H1 (cell line): ENCODE measurements at regions of chr9 and their contacts with region 1.

Region 1: GRCh38 chr9:93682232-93682968 is 106.0 kb downstream of the PHF2 start:
- DNase-seq: peak; percentile 60 to 99
- H3K4me3 ChIP-seq: no peak overlapping the region
- H3K27ac ChIP-seq: peak overlapping the region; percentile 56; the same call in 1 of the 2 replicates
- H3K4me1 ChIP-seq: no peaks in the 10 kb centered on the region
- H3K27me3 ChIP-seq: no peaks in the 10 kb centered on the region
- CTCF ChIP-seq: peak in 2 of 3 experiments; percentile 82 to 92; a peak in 3 of 4 replicates
- EP300 ChIP-seq: peak in 1 of 2 experiments; percentile 66; a peak in 1 of 3 replicates
- POLR2A ChIP-seq: no peak
- RAD21 ChIP-seq: peak; percentile 95 to 98

Region 2: GRCh38 chr9:93612052-93612795 is 70.2 kb before region 1 on chr9:
- CTCF ChIA-PET with region 1: no interaction called
- POLR2A ChIA-PET with region 1: no interaction called
- DNase-seq: no peak
- H3K4me3 ChIP-seq: no peak overlapping the region
- H3K27ac ChIP-seq: no peak overlapping the region
- H3K4me1 ChIP-seq: peaks cover 0 to 4% (median 0%) of the 10 kb centered on the region in 4 experiments; a peak in 3 of 7 replicates
- H3K27me3 ChIP-seq: no peaks in the 10 kb centered on the region
- CTCF ChIP-seq: no peak
- EP300 ChIP-seq: no peak
- POLR2A ChIP-seq: no peak
- RAD21 ChIP-seq: no peak

Region 3: GRCh38 chr9:93633492-93634221 is 48.7 kb before region 1 on chr9:
- CTCF ChIA-PET with region 1: no interaction called
- POLR2A ChIA-PET with region 1: no interaction called
- DNase-seq: peak in 1 of 2 experiments; percentile 41
- H3K4me3 ChIP-seq: no peak overlapping the region
- H3K27ac ChIP-seq: no peak overlapping the region
- H3K4me1 ChIP-seq: peaks cover 0 to 5% (median 0%) of the 10 kb centered on the region in 4 experiments; a peak in 2 of 7 replicates
- H3K27me3 ChIP-seq: no peaks in the 10 kb centered on the region
- CTCF ChIP-seq: no peak
- EP300 ChIP-seq: no peak
- POLR2A ChIP-seq: no peak
- RAD21 ChIP-seq: no peak

Region 4: GRCh38 chr9:93801581-93802284 is 119.3 kb after region 1 on chr9:
- CTCF ChIA-PET with region 1: interaction called, 27 read pairs
- POLR2A ChIA-PET with region 1: no interaction called
- DNase-seq: no peak
- H3K4me3 ChIP-seq: no peak overlapping the region
- H3K27ac ChIP-seq: no peak overlapping the region
- H3K4me1 ChIP-seq: no peaks in the 10 kb centered on the region
- H3K27me3 ChIP-seq: no peaks in the 10 kb centered on the region
- CTCF ChIP-seq: no peak
- EP300 ChIP-seq: no peak
- POLR2A ChIP-seq: no peak
- RAD21 ChIP-seq: no peak

Region 5: DNA sequence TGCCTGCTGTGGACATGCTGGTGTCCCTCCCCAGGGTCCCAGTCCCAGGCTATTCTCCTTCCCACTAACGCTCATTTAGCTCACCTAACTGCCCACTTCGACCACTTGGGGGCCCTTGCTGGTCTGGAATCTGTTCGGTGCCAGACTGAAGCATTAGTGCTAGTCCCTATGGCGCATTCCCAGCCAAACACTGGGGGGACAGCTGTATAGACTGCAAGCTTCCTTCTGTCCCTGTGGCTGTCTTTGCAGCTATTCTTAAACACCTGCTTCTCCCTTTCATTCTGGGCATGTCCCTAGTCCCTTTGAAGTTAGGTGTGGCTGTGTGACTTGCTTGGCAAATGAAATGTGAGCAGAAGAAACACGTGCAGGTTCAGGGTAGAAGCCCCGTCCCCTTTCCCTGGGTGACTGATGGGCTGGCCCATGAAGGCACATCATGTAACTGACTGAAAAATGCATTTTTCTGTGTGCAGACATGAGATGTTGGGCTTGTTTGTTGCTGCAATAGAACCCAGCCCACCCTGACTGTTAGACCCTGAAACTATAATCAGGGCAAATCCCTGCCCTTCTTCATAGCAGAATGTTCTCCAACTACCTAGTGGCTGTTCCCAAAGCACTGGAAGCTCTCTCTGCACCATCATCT is 138.4 kb after region 1 on chr9:
- CTCF ChIA-PET with region 1: interaction called, 33 read pairs
- POLR2A ChIA-PET with region 1: no interaction called
- DNase-seq: no peak
- H3K4me3 ChIP-seq: no peak overlapping the region
- H3K27ac ChIP-seq: no peak overlapping the region
- H3K4me1 ChIP-seq: no peaks in the 10 kb centered on the region; a peak in 1 of 7 replicates
- H3K27me3 ChIP-seq: peaks cover 0 to 3% (median 0%) of the 10 kb centered on the region in 4 experiments; a peak in 3 of 7 replicates
- CTCF ChIP-seq: peak in 2 of 3 experiments; percentile 66 to 72; a peak in 3 of 4 replicates
- EP300 ChIP-seq: no peak
- POLR2A ChIP-seq: no peak
- RAD21 ChIP-seq: peak; percentile 43 to 59

Region 6: DNA sequence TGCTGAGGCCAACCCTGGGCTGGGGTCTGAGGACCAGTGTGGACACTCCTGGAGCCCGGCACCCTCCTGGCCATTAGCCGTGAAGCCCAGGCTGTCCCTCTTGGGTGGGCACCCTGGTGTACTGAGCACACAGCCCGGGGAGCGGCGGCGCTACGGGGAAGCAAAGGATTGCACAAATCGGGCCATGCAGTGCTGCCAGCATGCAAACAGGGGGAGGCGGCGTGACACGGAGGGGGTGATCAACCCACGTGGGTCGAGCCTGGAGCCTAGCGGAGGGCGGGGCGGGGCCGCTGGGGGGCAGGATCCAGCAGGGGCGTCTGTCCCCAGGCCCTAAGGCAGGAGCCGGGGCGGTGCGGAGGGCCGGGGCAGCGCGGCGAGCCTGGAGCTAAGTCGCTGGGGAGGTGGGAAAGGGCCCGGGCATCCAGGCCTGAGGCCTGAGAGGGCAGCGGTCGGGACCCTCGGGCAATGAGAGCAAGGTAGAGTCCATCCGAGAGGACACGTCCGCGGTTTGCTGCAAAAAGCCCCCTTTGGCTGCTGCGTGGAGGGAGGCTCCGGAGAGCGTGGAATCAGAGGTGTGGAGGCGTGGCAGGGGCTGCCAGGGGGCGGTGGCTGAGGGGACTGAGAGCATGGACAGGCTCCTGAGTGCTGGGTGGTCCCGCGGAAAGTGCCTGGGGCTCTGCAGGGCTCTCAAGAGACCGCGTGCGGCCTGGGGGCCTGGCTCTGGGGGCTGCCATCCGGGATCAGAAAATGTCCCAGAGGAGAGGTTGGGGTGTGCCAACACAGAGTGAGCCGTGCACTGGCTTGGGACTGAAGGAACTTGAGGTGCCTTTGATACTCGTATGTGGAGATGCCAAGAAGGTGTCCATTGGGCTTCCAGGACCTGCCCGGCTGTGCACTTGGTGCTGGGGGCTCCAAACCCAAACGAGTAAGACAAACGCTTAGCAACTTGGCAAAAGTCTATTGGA is 178.6 kb after region 1 on chr9:
- CTCF ChIA-PET with region 1: interaction called, 21 read pairs
- POLR2A ChIA-PET with region 1: no interaction called
- DNase-seq: no peak
- H3K4me3 ChIP-seq: no peak overlapping the region
- H3K27ac ChIP-seq: no peak overlapping the region
- H3K4me1 ChIP-seq: peaks cover 2 to 8% (median 4%) of the 10 kb centered on the region in 4 experiments; a peak in 5 of 7 replicates
- H3K27me3 ChIP-seq: no peaks in the 10 kb centered on the region; a peak in 2 of 7 replicates
- CTCF ChIP-seq: peak in 1 of 3 experiments; percentile 20; a peak in 1 of 4 replicates
- EP300 ChIP-seq: no peak
- POLR2A ChIP-seq: no peak
- RAD21 ChIP-seq: no peak; a peak in 1 of 4 replicates

Region 7: DNA sequence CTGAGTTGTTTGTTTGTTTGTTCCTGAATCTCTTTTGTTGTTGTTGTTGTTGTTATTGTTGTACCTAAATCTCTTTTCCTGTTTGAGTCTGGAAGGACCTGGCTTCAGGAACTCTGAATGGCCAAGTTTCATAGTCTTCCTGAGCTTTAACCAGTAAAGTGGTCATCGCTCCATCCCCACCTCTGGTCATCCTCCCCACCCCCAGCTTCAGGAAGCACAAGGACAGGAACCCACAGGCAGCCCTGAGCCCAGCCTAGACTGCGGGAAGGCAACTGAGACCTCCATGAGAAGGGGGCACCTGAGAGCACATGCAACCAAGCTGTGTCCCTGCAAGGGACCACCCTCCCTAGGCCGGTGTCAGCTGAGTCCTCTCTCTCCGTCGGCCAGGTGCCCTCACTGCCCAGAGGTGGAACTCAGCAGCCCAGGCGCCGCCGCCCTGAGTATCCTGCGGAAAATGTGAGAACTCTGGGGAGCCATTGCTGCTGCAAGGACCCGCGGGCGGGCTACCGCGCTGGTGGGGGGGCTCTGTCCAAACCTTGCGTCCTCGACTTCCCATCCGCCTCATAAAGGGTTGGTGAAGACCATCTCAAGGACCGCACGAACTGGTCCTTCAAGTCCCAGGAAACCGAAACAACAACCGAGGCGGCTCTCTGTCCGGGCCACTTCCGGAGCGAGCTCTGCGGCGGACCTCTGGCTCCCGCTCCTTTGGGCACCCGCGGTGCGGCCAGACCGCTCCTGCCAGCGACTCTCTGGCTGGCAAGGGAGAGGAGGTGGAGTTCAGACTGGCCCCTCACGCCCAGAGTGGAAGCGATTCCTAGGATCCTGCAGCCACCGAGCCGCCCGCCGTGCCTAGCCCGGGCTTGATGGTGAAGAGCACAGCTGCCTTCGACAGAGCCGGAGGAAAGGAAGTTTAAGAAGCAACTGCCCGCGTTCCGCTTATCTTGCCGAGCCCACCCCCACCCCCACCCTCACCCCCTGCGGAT is 268.5 kb after region 1 on chr9:
- CTCF ChIA-PET with region 1: interaction called, 24 read pairs
- POLR2A ChIA-PET with region 1: interaction called, 4 read pairs
- DNase-seq: peak in 1 of 2 experiments; percentile 75
- H3K4me3 ChIP-seq: peak overlapping the region; percentile 14 to 57 (median 24); a peak in 7 of 8 replicates
- H3K27ac ChIP-seq: no peak overlapping the region
- H3K4me1 ChIP-seq: peaks cover 0 to 73% (median 42%) of the 10 kb centered on the region in 4 experiments; a peak in 6 of 7 replicates
- H3K27me3 ChIP-seq: peaks cover 96 to 99% (median 96%) of the 10 kb centered on the region in 4 experiments
- CTCF ChIP-seq: no peak
- EP300 ChIP-seq: no peak
- POLR2A ChIP-seq: no peak
- RAD21 ChIP-seq: no peak

Region 8: DNA sequence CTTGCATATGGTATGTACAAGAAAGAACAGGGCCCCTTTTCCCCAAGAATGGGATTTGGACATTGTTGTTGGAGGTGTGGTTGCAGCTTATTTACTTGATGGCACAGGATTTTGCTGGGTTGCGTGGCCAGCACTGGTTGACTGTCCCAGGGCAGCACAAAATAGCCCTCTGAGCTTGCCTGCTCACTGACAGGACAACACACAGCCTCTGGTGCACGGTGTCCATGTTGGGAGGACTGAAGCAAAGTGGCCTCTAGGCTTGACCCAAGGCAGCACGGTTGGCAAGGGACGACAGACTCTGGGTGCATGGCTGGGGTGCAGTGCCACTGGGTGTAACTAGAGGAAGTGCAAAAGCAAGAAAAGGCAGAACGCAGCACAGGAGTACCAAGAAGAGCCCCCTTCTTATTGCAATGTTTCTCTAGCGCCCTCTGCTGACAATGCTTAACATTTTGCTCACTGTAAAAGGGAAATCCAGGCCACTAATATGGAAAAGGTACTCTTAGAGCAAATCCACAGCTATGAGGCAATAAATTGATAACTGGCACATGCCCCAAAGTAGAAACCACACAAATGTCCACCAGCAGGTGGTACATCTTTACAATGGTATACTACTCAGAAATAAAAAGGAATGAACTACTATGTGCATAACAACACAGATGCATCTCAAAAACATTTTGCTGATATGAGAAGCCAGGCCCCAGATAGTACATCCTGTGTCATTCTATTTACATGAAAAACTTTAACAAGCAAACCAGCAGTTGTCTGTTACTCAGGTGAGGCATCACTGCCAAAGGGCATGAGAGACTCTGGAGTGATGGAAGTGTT is 320.1 kb after region 1 on chr9:
- CTCF ChIA-PET with region 1: interaction called, 72 read pairs
- POLR2A ChIA-PET with region 1: no interaction called
- DNase-seq: peak in 1 of 2 experiments; percentile 75
- H3K4me3 ChIP-seq: no peak overlapping the region
- H3K27ac ChIP-seq: no peak overlapping the region
- H3K4me1 ChIP-seq: peaks cover 0 to 2% (median under 1%) of the 10 kb centered on the region in 4 experiments; a peak in 2 of 7 replicates
- H3K27me3 ChIP-seq: no peaks in the 10 kb centered on the region
- CTCF ChIP-seq: peak in 2 of 3 experiments; percentile 87 to 89; a peak in 3 of 4 replicates
- EP300 ChIP-seq: no peak
- POLR2A ChIP-seq: no peak
- RAD21 ChIP-seq: peak; percentile 81 to 87